Activated CD4-positive, alpha-beta T cell treated with anti-CD3 and anti-CD28 coated beads, Interleukin-2, amount 10 ng/mL, durations not matched to agents 24 days and 14 days (primary cell): ENCODE measurements at regions of chr2 and their contacts with region 1.

Region 1: DNA sequence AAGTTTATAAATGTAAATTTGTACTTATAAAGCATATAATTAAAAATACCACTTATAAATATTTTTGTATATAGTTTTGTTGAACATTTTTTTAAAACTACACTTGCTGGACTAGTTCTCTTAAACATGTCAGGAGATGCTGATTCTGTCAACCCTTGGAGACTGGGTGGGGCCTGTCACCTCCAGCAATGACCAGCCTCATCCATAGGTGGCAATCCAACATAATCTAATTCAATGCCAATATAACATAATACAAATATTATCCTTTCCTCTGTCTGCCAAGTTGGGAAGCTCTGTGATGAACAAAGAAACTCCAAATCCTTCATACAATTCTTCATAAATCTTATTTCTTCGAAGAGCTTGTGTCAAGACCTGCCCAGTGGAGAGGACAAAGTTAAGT is 140.4 kb downstream of the RBMS1 start:
- DNase-seq: peak; percentile 70
- H3K4me3 Mint-ChIP-seq: no peak overlapping the region
- H3K27ac Mint-ChIP-seq: no peak overlapping the region
- H3K4me1 Mint-ChIP-seq: peaks cover 28% of the 10 kb centered on the region
- H3K27me3 Mint-ChIP-seq: no peaks in the 10 kb centered on the region

Region 2: GRCh38 chr2:160332318-160332717 is 20.8 kb before region 1 on chr2:
- intact Hi-C with region 1: loop called (anchors 2 kb)
- DNase-seq: peak; percentile 71
- H3K4me3 Mint-ChIP-seq: peak overlapping the region; percentile 33
- H3K27ac Mint-ChIP-seq: peak overlapping the region; percentile 66
- H3K4me1 Mint-ChIP-seq: peaks cover 77% of the 10 kb centered on the region
- H3K27me3 Mint-ChIP-seq: no peaks in the 10 kb centered on the region

Region 3: DNA sequence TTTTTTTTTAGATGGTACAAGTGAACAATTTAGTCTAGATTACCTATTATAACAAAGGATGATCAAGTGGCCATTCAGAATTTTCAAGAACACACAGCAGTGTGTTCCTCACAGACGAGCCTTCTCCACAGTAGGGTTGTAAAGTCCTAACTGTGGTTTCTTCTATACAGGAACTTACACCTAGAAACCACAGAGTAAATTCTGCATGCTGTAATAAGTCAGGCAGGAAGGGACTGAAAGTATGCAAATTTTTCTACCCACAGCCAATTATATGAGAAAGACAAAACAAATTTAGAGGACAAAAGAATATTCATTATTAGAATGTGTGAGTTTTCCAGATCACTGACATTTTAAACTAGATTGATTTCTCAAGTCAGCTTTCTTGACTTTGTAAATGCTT is 41.0 kb after region 1 on chr2:
- intact Hi-C with region 1: loop called (anchors 5 kb)
- DNase-seq: no peak
- H3K4me3 Mint-ChIP-seq: peak overlapping the region; percentile 45
- H3K27ac Mint-ChIP-seq: peak overlapping the region; percentile 68
- H3K4me1 Mint-ChIP-seq: peaks cover 44% of the 10 kb centered on the region
- H3K27me3 Mint-ChIP-seq: no peaks in the 10 kb centered on the region

Region 4: DNA sequence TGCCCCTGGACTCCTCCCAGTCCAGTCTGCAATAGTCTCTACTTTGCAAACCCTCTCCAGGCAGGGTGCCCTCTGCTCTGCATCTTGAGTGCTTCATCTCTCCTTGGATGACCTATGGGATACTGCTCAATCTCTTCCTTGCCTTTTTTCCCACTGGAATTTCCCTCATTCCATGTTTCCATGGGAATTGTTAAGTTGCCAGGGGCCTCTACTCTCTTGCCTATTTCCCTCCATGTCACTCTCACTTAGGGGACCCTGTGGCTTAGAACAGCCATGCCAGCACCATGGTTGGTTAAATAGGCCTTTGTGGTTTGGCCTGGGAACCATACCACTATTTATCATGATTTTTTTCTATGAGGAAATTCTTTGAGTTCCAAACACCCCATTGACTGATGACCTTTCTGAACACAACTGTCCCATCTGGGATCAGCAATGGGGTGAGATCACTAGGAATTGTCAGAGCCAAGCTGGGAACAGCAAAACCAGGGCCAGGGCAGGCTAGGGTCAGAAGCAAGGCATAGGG is 231.9 kb after region 1 on chr2:
- intact Hi-C with region 1: loop called (anchors 5 kb)
- DNase-seq: no peak
- H3K4me3 Mint-ChIP-seq: no peak overlapping the region
- H3K27ac Mint-ChIP-seq: no peak overlapping the region
- H3K4me1 Mint-ChIP-seq: peaks cover 2% of the 10 kb centered on the region
- H3K27me3 Mint-ChIP-seq: peaks cover 4% of the 10 kb centered on the region

Region 5: DNA sequence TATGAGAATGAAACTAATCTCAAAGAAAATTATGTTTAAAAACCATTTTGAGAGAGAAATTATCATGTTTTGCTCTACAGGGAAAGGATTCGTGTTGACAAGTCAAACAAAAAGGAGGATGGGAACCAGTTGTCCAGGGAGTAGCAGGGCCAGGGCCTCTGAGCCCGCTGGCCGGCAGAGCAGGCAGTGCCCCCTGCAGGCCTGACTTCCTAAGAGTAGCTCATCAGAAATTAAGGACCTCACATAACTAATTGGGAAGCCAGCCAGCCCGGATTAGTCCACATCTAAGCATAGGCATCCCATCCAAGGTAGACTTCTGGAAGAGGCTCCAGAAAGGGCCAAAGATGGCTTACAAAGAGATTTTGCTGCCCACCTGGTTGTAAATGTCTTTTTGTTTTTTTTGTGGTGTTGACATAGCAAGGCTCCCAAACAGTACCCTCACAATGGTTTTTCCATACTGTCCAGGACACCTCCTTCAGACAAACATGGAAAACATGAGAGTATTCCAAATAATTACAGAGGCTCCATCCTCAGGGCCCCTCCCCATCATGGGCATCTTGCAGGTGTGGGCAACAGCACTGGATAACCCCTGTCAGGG is 565.8 kb after region 1 on chr2:
- intact Hi-C with region 1: loop called (anchors 1 kb)
- DNase-seq: peak; percentile 75
- H3K4me3 Mint-ChIP-seq: no peak overlapping the region
- H3K27ac Mint-ChIP-seq: no peak overlapping the region
- H3K4me1 Mint-ChIP-seq: no peaks in the 10 kb centered on the region
- H3K27me3 Mint-ChIP-seq: peaks cover 14% of the 10 kb centered on the region

Region 6: GRCh38 chr2:160994141-160995002 is 641.2 kb after region 1 on chr2:
- intact Hi-C with region 1: loop called (anchors 10 kb)
- DNase-seq: peak; percentile 93
- H3K4me3 Mint-ChIP-seq: no peak overlapping the region
- H3K27ac Mint-ChIP-seq: no peak overlapping the region
- H3K4me1 Mint-ChIP-seq: peaks cover 9% of the 10 kb centered on the region
- H3K27me3 Mint-ChIP-seq: peaks cover 4% of the 10 kb centered on the region